GM12878 (cell line): ENCODE measurements at regions of chrX and their contacts with region 1.

Region 1: DNA sequence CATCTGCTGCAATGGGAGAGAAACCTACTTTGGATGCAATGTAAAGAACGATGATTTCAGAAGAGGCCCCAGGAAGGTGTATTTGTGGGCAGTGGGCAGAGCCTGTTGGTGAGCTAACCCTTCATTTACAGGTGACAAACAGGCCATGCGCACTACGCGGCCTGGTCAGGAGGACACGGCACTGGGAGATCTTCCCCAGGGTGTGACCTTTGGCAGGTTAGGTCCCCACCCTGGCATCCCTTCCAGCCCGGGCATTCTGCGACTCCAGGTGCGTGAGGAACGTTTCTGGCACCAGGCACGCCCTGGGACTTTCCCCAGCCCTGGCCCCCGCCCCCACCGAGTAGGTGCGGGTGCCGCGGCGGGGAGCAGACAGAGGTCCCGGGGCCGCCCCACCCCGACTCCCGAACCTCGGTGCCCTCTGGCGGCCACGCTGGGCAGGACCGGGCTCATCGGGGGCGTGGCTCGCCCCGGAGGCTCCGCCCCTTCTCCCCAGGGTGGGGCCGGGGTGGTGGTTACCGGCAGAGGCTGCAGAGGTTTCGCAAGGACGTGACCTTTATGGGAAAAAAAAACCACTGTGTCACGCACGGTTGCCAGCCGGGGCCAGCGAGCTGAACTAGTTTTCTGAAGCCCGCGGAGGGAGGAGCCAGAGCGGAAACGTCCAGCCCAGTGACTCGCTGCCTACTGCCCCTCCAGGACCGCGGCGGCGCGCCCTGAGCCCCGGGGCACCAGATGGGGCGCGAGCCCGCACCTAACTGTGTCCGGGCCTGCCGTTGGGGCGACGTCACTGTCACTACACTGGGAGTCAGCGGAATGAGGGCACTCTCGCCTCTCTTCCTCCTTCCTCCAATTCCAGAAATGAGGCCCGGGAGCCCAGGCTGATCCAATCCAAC is 5.0 kb upstream of the NYX start:
- DNase-seq: peak; percentile 68
- ATAC-seq: peak; percentile 87
- H3K4me3 ChIP-seq: peak overlapping the region; percentile 63
- H3K27ac ChIP-seq: peak overlapping the region; percentile 70
- H3K4me1 ChIP-seq: peaks cover 13% of the 10 kb centered on the region; the same call in 1 of the 2 replicates
- H3K27me3 ChIP-seq: no peaks in the 10 kb centered on the region
- CTCF ChIP-seq: peak; percentile 54 to 71 (median 66)
- EP300 ChIP-seq: no peak; a peak in 1 of 4 replicates
- POLR2A ChIP-seq: peak; percentile 50
- RAD21 ChIP-seq: peak; percentile 58

Region 2: DNA sequence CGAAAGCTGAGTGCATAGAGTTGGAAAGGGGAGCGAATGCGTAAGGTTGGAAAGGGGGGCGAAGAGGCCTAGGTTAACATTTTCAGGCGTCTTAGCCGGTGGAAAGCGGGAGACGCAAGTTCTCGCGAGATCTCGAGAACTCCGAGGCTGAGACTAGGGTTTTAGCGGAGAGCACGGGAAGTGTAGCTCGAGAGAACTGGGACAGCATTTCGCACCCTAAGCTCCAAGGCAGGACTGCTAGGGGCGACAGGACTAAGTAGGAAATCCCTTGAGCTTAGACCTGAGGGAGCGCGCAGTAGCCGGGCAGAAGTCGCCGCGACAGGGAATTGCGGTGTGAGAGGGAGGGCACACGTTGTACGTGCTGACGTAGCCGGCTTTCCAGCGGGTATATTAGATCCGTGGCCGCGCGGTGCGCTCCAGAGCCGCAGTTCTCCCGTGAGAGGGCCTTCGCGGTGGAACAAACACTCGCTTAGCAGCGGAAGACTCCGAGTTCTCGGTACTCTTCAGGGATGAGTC is 108.4 kb before region 1 on chrX and contains the start of gene DDX3X:
- CTCF ChIA-PET with region 1: interaction called, 4 read pairs
- POLR2A ChIA-PET with region 1: interaction called, 4 read pairs
- RAD21 ChIA-PET with region 1: no interaction called
- SMC1A ChIA-PET with region 1: interaction called, 4 read pairs
- in situ Hi-C with region 1: no loop called
- intact Hi-C with region 1: loop called (anchors 2 kb)
- DNase-seq: peak; percentile 91
- ATAC-seq: peak; percentile 72
- H3K4me3 ChIP-seq: peak within 1 kb of the TSS; percentile 91
- H3K27ac ChIP-seq: peak within 1 kb of the TSS; percentile 99
- H3K4me1 ChIP-seq: peaks cover 10% of the 10 kb centered on the region
- H3K27me3 ChIP-seq: no peaks in the 10 kb centered on the region; a peak in 1 of 4 replicates
- CTCF ChIP-seq: peak; percentile 19 to 37 (median 29); a peak in 5 of 6 replicates
- EP300 ChIP-seq: peak in 1 of 2 experiments; percentile 4; a peak in 1 of 4 replicates
- POLR2A ChIP-seq: no peak; the same call in none of the 2 replicates
- RAD21 ChIP-seq: 0 out of 2 replicates have a peak, but pooled peaks have one; percentile 3
- polyA plus RNA-seq, gene DDX3X: 52.0 to 56.7 TPM

Region 3: DNA sequence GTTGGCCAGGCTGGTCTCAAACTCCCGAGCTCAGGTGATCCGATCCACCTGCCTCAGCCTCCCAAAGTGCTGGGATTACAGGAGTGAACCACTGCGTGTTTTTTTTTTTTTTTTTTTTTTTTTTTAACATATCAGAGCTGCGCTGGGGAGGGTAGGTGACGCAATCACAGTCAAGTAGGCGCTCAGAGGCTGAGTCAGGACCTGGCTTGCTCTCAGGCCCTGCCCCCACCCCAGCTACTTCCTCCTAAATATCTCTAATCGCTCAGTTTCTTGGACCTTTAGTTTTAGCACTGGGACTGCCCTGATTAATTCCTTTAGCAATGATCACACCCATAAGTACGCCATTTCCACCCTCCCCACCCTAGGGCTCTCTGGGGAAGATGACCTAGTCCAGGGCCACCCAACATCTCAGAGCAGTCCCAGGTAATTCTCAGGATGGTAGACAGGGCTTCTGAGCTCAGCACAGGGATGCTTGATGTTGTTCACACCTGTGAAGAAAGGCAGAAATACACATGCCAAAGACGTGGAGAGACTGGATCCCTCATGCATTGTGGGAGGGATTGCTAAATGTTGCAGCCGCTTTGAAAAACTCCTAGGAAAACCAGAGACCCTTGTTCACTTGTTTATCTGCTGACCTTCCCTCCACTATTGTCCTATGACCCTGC is 58.0 kb before region 1 on chrX:
- CTCF ChIA-PET with region 1: no interaction called
- POLR2A ChIA-PET with region 1: no interaction called
- RAD21 ChIA-PET with region 1: no interaction called
- SMC1A ChIA-PET with region 1: no interaction called
- in situ Hi-C with region 1: no loop called
- intact Hi-C with region 1: no loop called
- DNase-seq: no peak
- ATAC-seq: no peak
- H3K4me3 ChIP-seq: no peak overlapping the region
- H3K27ac ChIP-seq: no peak overlapping the region
- H3K4me1 ChIP-seq: no peaks in the 10 kb centered on the region
- H3K27me3 ChIP-seq: no peaks in the 10 kb centered on the region
- CTCF ChIP-seq: no peak
- EP300 ChIP-seq: no peak
- POLR2A ChIP-seq: no peak
- RAD21 ChIP-seq: no peak

Region 4: DNA sequence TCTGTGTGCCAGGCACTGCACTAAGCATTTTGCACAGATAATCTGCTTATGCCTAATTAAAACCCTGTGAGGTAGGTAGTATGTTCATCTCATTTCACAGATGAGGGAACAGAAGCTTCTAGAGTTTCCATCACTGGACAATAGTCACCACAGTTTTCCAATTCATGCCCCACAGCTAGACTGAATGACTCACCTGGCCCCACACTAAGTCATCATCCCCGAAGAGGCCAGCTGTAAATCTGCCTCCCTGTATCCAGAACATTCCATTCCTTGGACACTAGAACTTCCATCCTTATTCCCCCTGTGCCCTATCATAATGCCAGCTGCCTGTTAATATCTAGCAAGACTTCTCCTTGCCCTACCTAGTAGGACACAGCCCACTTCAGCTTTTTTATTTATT is 36.0 kb before region 1 on chrX:
- CTCF ChIA-PET with region 1: no interaction called
- POLR2A ChIA-PET with region 1: no interaction called
- RAD21 ChIA-PET with region 1: no interaction called
- SMC1A ChIA-PET with region 1: no interaction called
- in situ Hi-C with region 1: no loop called
- intact Hi-C with region 1: no loop called
- DNase-seq: no peak
- ATAC-seq: no peak
- H3K4me3 ChIP-seq: no peak overlapping the region
- H3K27ac ChIP-seq: no peak overlapping the region
- H3K4me1 ChIP-seq: no peaks in the 10 kb centered on the region
- H3K27me3 ChIP-seq: no peaks in the 10 kb centered on the region
- CTCF ChIP-seq: no peak
- EP300 ChIP-seq: no peak
- POLR2A ChIP-seq: no peak
- RAD21 ChIP-seq: no peak